Thyroid gland (tissue), 4 donors: ENCODE measurements at regions of chr17 and their contacts with region 1.

Region 1: GRCh38 chr17:58377093-58377601 is 25.1 kb upstream of the SUPT4H1 start:
- DNase-seq: no peak
- H3K4me3 ChIP-seq: no peak overlapping the region
- H3K27ac ChIP-seq: no peak overlapping the region
- H3K4me1 ChIP-seq: no peaks in the 10 kb centered on the region
- H3K27me3 ChIP-seq: no peaks in the 10 kb centered on the region
- CTCF ChIP-seq: no peak
- POLR2A ChIP-seq: no peak

Region 2: GRCh38 chr17:58329035-58329809 is 47.9 kb before region 1 on chr17:
- intact Hi-C with region 1: loop called (anchors 10 kb)
- DNase-seq: no peak
- H3K4me3 ChIP-seq: no peak overlapping the region
- H3K27ac ChIP-seq: no peak overlapping the region
- H3K4me1 ChIP-seq: peaks cover 0 to 8% of the 10 kb centered on the region in 2 donors
- H3K27me3 ChIP-seq: no peaks in the 10 kb centered on the region
- CTCF ChIP-seq: peak in 1 of 6 experiments; percentile 6
- POLR2A ChIP-seq: no peak